Ascending aorta (tissue), 2 donors: ENCODE measurements at regions of chr16 and their contacts with region 1.

Region 1: DNA sequence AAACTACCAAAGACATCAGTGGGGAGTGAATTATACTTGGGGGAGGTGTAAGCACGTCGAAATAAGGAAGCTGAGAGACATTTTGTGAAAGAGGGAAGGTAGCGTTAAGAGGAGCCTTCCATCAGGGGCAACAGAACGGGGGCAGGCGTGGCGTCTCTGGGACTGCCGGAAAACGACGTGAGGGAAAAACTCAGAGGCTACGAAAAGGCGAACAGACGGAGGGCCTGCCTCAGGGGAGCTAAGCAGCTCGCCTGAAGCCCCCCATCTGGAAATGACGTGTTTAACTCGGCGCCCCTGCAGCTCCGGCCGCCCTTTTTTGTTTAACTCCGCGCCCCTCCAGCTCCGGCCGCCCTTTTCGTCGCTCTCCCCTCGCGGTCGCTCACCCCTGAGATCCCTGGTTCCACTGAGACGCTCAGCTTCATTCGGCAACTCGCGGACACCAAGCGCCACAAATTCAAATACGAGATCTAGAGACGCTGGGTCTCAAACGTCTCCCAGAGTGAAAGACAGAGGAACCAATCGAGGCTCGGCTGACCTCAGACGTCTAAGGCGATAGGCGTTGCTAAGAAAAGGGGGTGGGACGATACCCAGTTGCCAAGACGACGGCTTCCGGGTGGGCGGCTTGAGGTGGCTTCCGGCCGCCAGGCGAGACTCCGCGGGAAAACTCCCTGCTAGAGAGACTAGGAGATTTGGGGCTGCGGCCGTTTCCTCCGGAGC is 383.3 kb downstream of the ZFHX3 start:
- DNase-seq: peak; percentile 88 to 97
- H3K4me3 ChIP-seq: peak overlapping the region; percentile 61 to 92
- H3K27ac ChIP-seq: peak overlapping the region in 1 of 2 donors; percentile 48
- H3K4me1 ChIP-seq: no peaks in the 10 kb centered on the region
- H3K27me3 ChIP-seq: no peaks in the 10 kb centered on the region
- CTCF ChIP-seq: no peak

Region 2: DNA sequence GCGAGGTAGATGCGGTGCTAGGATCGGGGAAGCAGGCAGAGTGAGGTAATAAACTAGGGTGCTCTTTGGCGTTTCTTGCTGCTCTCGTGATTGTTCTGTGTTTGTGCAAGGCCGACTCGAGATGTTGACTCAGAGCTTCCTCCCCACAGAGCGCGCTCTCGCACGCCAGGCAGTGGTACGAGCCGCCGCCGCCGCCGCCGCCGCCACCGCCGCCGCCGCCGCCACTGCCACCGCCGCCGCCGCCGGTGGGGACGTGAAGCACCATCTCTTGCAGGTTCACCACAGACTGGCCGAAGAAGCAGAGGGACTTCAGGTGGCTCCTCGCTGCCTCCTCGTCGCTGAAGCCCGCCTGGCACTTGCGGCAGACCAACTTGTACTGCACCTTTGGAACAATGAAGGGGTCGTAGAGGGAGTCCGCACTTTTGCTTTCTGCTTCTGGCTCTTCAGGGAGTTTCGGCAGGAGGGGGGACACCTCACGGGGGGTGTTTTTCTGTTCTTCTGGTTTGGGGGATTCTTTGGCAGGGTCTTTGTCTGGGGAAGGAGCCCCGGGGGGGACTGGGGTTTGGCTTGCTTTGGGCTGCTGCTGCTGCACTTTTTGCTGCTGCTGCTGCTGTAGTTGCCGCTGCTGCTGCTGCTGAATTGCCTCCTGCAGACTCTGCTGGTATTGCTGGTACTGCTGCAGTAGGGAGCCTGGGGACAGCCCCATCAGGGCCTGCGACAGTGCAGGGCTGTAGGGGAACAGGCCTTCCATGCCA is 123.0 kb after region 1 on chr16:
- intact Hi-C with region 1: loop called (anchors 2 kb)
- DNase-seq: peak; percentile 65 to 90
- H3K4me3 ChIP-seq: peak overlapping the region; percentile 56 to 71
- H3K27ac ChIP-seq: peak overlapping the region; percentile 87
- H3K4me1 ChIP-seq: peaks cover 5 to 12% of the 10 kb centered on the region in 2 donors
- H3K27me3 ChIP-seq: no peaks in the 10 kb centered on the region
- CTCF ChIP-seq: no peak

Region 3: GRCh38 chr16:72947379-72948237 is 282.9 kb after region 1 on chr16:
- intact Hi-C with region 1: loop called (anchors 10 kb)
- DNase-seq: no peak
- H3K4me3 ChIP-seq: peak overlapping the region in 1 of 2 donors; percentile 6
- H3K27ac ChIP-seq: peak overlapping the region; percentile 60 to 81
- H3K4me1 ChIP-seq: peaks cover 3 to 29% of the 10 kb centered on the region in 2 donors
- H3K27me3 ChIP-seq: no peaks in the 10 kb centered on the region
- CTCF ChIP-seq: no peak

Region 4: GRCh38 chr16:73020362-73020884 is 355.8 kb after region 1 on chr16:
- intact Hi-C with region 1: loop called (anchors 10 kb)
- DNase-seq: peak in 1 of 2 donors; percentile 92
- H3K4me3 ChIP-seq: peak overlapping the region in 1 of 2 donors; percentile 45
- H3K27ac ChIP-seq: peak overlapping the region; percentile 30 to 62
- H3K4me1 ChIP-seq: peaks cover 25 to 70% of the 10 kb centered on the region in 2 donors
- H3K27me3 ChIP-seq: no peaks in the 10 kb centered on the region
- CTCF ChIP-seq: no peak

Region 5: DNA sequence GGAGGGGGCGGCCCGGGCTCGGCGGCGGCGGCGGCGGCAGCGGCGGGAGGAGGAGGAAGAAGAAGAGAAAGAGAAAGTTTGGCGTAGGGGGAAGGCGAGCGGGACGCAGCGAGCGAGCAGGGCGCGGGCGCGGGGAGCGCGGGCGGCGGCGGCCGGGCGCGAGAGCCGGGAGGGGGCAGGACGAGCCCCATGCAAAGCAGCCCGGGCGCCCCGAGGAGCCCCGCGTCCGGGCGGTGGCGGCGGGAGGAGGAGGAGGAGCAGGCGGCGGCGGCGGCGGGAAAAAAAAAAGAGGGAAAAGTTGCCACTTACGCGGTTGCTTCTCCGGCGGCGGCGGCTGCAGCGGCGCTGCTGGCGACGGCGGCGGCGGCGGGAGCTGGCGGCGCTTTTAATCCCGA is 393.6 kb after region 1 on chr16:
- intact Hi-C with region 1: loop called (anchors 10 kb)
- DNase-seq: peak in 1 of 2 donors; percentile 70
- H3K4me3 ChIP-seq: peak overlapping the region; percentile 85 to 88
- H3K27ac ChIP-seq: peak overlapping the region; percentile 98 to 99
- H3K4me1 ChIP-seq: peaks cover 4 to 19% of the 10 kb centered on the region in 2 donors
- H3K27me3 ChIP-seq: no peaks in the 10 kb centered on the region
- CTCF ChIP-seq: no peak

Region 6: GRCh38 chr16:73196670-73197069 is 532.0 kb after region 1 on chr16:
- intact Hi-C with region 1: loop called (anchors 10 kb)
- DNase-seq: peak in 1 of 2 donors; percentile 84
- H3K4me3 ChIP-seq: no peak overlapping the region
- H3K27ac ChIP-seq: no peak overlapping the region
- H3K4me1 ChIP-seq: no peaks in the 10 kb centered on the region
- H3K27me3 ChIP-seq: no peaks in the 10 kb centered on the region
- CTCF ChIP-seq: peak; percentile 52 to 74 (median 61)